ENCODE measurements at regions of chr15 and their contacts with region 1.

Region 1: DNA sequence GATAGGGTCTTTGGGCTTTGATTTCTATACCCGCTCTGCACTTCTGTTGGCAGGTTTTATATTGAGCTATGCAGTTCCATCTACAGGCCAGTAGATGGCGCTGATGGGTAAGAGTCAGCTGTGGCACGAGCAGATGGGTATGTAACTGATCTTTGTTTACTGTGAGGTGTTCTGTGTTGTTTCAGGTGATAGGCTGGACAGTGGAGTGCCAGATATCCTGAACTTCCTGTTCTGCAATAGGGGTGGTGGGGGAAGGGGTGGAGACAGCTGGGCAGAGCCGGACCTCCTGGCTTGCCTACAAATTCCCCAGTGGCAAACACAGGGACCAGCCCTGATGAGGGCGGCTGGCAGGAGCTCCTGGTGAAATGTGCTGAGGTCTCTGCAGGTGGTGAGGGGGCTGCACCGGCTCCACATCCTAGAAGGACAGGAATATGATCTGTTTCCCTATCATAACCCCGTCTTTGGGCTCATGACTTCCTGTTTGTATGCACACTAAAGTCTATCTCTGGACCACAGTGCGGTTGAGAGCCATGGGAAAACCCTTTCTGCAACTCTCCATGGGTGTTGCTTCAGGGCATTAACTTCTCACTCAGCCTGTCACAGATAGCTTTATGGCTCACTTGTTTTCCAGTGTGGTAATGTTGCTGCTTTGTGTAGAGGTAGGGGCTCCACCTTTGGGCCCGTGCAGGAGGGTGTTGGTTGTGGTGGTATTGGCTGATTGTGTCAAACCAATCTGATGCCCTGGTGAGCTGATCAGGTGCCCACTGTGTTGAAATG is 13.4 kb upstream of the FAM98B start:
- DNase-seq: peak in 4 of 5 donors; percentile 59 to 66 (median 62)
- H3K4me3 ChIP-seq: no peak overlapping the region
- H3K4me3 Mint-ChIP-seq: peak overlapping the region in 1 of 8 donors; percentile 55
- H3K27ac ChIP-seq: no peak overlapping the region
- H3K27ac Mint-ChIP-seq: peak overlapping the region in 1 of 7 donors; percentile 12
- H3K4me1 ChIP-seq: peaks cover 5% of the 10 kb centered on the region
- H3K4me1 Mint-ChIP-seq: peaks cover 0 to 7% (median 3%) of the 10 kb centered on the region in 4 donors
- H3K27me3 ChIP-seq: no peaks in the 10 kb centered on the region
- H3K27me3 Mint-ChIP-seq: peaks cover 20 to 21% of the 10 kb centered on the region in 2 donors

Region 2: DNA sequence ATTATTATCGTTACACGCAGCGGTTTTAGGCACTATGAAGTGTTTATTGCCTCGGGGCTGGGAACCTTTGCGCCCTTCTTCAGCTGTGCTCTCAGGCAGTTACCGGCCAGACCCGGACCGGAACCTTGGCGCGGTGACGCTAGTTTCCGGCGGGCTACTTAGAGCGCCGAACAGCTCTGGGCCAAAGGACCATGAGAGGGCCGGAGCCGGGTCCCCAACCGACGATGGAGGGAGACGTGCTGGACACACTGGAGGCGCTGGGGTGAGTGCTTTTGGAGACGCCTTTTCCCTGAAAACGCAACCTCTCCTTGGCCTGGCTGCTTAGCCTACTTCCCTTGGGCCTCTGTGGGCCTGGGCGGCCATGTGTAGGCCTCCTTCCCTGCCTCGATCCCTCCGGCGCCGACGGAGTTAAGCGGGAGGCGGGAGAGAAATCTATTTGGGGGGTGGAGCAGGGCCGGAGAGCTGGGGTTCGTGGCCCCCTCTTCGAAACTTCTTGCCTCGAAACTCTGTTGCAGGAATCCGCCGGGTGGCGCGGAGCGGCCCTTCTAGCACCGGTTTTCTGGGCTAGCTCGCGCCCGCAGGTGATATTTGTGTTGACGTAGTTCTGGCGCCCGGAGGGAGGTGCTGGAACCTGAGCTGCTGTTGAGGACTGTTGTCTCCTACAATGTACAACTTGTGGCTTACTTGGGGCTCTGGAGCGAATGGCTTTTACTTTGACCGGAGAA is 13.6 kb after region 1 on chr15 and contains the start of gene FAM98B:
- CTCF ChIA-PET with region 1: interaction called, 49 read pairs
- POLR2A ChIA-PET with region 1: interaction called, 10 read pairs
- intact Hi-C with region 1: no loop called
- DNase-seq: peak; percentile 80 to 88 (median 84)
- H3K4me3 ChIP-seq: peak within 1 kb of the TSS; percentile 88 to 95
- H3K4me3 Mint-ChIP-seq: peak within 1 kb of the TSS; percentile 95 to 99 (median 97)
- H3K27ac ChIP-seq: peak within 1 kb of the TSS; percentile 74
- H3K27ac Mint-ChIP-seq: peak within 1 kb of the TSS; percentile 94 to 98 (median 96)
- H3K4me1 ChIP-seq: peaks cover 23% of the 10 kb centered on the region
- H3K4me1 Mint-ChIP-seq: peaks cover 26 to 39% (median 32%) of the 10 kb centered on the region in 4 donors
- H3K27me3 ChIP-seq: no peaks in the 10 kb centered on the region
- H3K27me3 Mint-ChIP-seq: no peaks in the 10 kb centered on the region
- total RNA-seq, gene FAM98B: 22.0 to 26.3 TPM

Region 3: DNA sequence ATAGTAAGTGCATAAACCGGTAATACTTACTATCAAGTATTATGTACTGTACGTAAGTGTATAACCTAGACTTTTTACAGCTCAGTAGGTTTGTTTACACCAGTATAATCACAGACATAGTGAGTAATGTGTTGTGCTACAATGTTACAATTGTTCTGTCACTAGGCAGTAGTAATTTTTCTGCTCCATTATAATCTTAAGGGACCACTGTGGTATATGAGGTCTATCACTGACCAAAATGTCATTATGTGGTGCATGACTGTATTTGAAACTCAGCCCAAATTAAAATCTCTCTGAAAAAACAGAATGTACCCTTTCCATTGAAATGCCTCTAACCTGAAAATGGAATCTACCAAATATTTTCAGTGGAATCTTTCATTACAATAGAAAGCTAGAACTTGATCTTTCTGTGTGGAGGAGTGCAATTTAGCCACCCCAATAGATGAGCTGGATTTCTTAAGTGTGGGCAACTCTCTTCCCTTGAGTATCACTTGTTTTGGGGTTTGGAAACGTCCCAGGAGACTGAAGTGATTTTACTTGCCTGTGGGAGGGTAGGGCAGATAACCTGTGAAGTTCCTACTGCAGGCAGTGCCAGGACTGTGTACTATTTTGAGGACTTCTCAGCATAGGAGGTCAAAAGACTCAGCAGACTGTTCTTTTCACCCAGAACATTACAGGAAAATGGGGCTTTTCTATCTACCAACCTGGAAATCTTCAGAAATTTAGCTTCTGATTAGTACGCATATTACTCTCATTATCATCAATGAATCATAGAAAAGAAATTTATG is 64.3 kb after region 1 on chr15:
- CTCF ChIA-PET with region 1: interaction called, 18 read pairs
- POLR2A ChIA-PET with region 1: no interaction called
- intact Hi-C with region 1: no loop called
- DNase-seq: no peak
- H3K4me3 ChIP-seq: no peak overlapping the region
- H3K4me3 Mint-ChIP-seq: no peak overlapping the region
- H3K27ac ChIP-seq: no peak overlapping the region
- H3K27ac Mint-ChIP-seq: peak overlapping the region in 6 of 7 donors; percentile 38 to 89 (median 59)
- H3K4me1 ChIP-seq: peaks cover 3% of the 10 kb centered on the region
- H3K4me1 Mint-ChIP-seq: peaks cover 2 to 15% (median 7%) of the 10 kb centered on the region in 4 donors
- H3K27me3 ChIP-seq: no peaks in the 10 kb centered on the region
- H3K27me3 Mint-ChIP-seq: no peaks in the 10 kb centered on the region

Region 4: GRCh38 chr15:38817427-38818156 is 377.1 kb after region 1 on chr15:
- CTCF ChIA-PET with region 1: interaction called, 10 read pairs
- POLR2A ChIA-PET with region 1: no interaction called
- intact Hi-C with region 1: loop called (anchors 10 kb)
- DNase-seq: peak; percentile 69 to 78 (median 73)
- H3K4me3 ChIP-seq: no peak overlapping the region
- H3K4me3 Mint-ChIP-seq: peak overlapping the region in 4 of 8 donors; percentile 17 to 52 (median 20)
- H3K27ac ChIP-seq: no peak overlapping the region
- H3K27ac Mint-ChIP-seq: no peak overlapping the region
- H3K4me1 ChIP-seq: no peaks in the 10 kb centered on the region
- H3K4me1 Mint-ChIP-seq: peaks cover 0 to 5% (median 2%) of the 10 kb centered on the region in 4 donors
- H3K27me3 ChIP-seq: no peaks in the 10 kb centered on the region
- H3K27me3 Mint-ChIP-seq: peaks cover 0 to 2% of the 10 kb centered on the region in 2 donors

Region 5: DNA sequence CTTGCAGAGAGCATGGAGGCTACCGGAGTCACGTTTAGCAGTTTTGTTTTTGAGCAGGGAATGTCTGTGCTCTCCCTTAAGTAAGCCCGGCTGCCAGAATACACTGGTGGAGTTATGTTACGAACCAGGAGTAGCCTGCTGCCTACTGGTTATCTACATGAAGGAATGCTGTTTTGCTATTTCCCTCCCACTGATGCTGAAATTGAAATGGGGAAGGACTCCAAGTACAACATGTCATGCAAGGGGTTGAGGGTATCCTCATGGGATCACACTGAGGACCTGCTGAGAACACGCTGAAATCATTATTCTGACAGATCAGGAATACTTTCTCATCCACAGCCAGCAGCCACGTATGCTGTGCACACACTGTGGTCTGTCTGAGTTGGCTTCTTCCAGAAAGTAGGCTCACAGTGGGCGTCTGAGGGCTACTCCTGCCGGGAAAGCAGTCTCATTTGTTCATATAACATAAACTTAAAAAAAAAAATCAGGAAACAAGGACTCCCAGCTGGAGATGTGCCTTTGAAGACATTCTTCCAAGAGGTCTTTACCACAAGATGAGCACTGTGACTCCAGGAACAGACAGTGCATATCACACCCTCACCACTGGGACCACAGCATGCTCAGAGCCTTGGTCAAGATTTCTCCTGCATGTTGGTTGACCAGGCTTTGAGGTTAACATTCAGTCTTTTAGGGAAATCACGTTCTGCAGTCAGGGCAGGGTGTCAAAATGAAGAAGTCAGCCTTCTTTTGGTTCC is 424.5 kb after region 1 on chr15:
- CTCF ChIA-PET with region 1: interaction called, 13 read pairs
- POLR2A ChIA-PET with region 1: no interaction called
- intact Hi-C with region 1: no loop called
- DNase-seq: no peak
- H3K4me3 ChIP-seq: no peak overlapping the region
- H3K4me3 Mint-ChIP-seq: no peak overlapping the region
- H3K27ac ChIP-seq: no peak overlapping the region
- H3K27ac Mint-ChIP-seq: no peak overlapping the region
- H3K4me1 ChIP-seq: no peaks in the 10 kb centered on the region
- H3K4me1 Mint-ChIP-seq: no peaks in the 10 kb centered on the region
- H3K27me3 ChIP-seq: no peaks in the 10 kb centered on the region
- H3K27me3 Mint-ChIP-seq: peaks cover 4 to 11% of the 10 kb centered on the region in 2 donors

Region 6: GRCh38 chr15:39580117-39580484 is 1139.6 kb after region 1 on chr15:
- CTCF ChIA-PET with region 1: interaction called, 9 read pairs
- POLR2A ChIA-PET with region 1: no interaction called
- intact Hi-C with region 1: loop called (anchors 1 kb)
- DNase-seq: peak; percentile 76 to 84 (median 84)
- H3K4me3 ChIP-seq: peak overlapping the region in 1 of 2 donors; percentile 56
- H3K4me3 Mint-ChIP-seq: peak overlapping the region; percentile 63 to 90 (median 75)
- H3K27ac ChIP-seq: no peak overlapping the region
- H3K27ac Mint-ChIP-seq: peak overlapping the region in 2 of 7 donors; percentile 35 to 69
- H3K4me1 ChIP-seq: peaks cover 14% of the 10 kb centered on the region
- H3K4me1 Mint-ChIP-seq: peaks cover 9 to 53% (median 19%) of the 10 kb centered on the region in 4 donors
- H3K27me3 ChIP-seq: peaks cover 2% of the 10 kb centered on the region
- H3K27me3 Mint-ChIP-seq: peaks cover 15 to 32% of the 10 kb centered on the region in 2 donors

Measured in CD4-positive, alpha-beta memory T cell (primary cell).